A549 (cell line): ENCODE measurements at regions of chr17 and their contacts with region 1.

Region 1: DNA sequence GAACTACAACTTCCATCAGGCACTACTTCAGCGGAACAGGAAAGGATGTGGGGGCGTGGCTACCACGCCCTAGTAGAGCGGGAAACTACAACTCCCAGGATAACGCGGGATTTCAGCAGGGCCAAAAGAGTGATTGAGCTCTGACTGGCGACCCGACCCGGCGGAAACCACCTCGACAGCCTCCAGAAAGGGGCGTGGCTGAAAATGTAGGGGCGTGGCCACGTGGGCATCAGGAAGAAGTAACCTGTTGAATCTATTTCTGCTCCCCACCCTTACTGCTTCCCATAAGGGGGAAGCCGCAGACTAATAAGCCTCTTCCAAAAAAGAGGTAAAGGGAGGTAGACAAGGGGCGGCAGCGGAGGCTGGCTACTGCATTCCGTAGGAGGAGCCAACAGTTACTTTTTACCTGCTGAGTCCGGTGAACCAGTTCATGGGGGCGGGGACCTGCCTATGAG is at the start of gene TMEM102:
- DNase-seq: peak; percentile 99
- ATAC-seq: peak; percentile 75 to 87
- H3K4me3 ChIP-seq: peak within 1 kb of the TSS; percentile 55
- H3K27ac ChIP-seq: peak within 1 kb of the TSS; percentile 62 to 85
- H3K4me1 ChIP-seq: peaks cover 23% of the 10 kb centered on the region
- CTCF ChIP-seq: no peak
- EP300 ChIP-seq: no peak
- POLR2A ChIP-seq: peak; percentile 16
- RAD21 ChIP-seq: no peak
- polyA plus RNA-seq, gene TMEM102: 4.4 and 4.9 TPM in 2 replicates

Region 2: GRCh38 chr17:7314719-7315569 is 120.3 kb before region 1 on chr17 and contains the start of gene GPS2:
- CTCF ChIA-PET with region 1: no interaction called
- POLR2A ChIA-PET with region 1: no interaction called
- DNase-seq: peak; percentile 93 to 95
- ATAC-seq: peak; percentile 77 to 82
- H3K4me3 ChIP-seq: peak within 1 kb of the TSS; percentile 75
- H3K27ac ChIP-seq: peak within 1 kb of the TSS; percentile 88 to 95
- H3K4me1 ChIP-seq: peaks cover 47% of the 10 kb centered on the region
- CTCF ChIP-seq: no peak
- EP300 ChIP-seq: peak in 1 of 2 experiments; percentile 6; a peak in 1 of 5 replicates
- POLR2A ChIP-seq: peak; percentile 82
- RAD21 ChIP-seq: no peak; a peak in 2 of 5 replicates
- polyA plus RNA-seq, gene GPS2: 48.5 and 61.7 TPM in 2 replicates

Region 3: DNA sequence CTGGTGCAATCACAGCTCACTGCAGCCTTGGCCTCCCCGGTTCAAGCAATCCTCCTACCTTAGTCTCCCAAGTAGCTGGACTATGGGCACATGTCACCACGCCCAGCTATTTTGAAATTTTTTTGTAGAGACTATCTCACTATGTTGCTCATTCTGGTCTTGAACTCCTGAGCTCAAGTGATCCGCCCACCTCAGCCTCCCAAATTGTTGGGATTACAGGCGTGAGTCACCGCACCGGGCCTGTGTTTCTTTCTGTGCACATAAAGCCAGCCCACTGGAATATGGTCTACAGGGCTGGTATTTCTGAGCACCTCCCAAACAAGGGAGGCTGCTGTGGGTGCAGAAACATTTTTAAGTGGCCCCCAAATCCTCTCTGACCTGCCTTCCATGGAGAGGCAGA is 71.9 kb before region 1 on chr17:
- CTCF ChIA-PET with region 1: interaction called, 232 read pairs
- POLR2A ChIA-PET with region 1: no interaction called
- DNase-seq: peak in 1 of 2 experiments; percentile 52
- ATAC-seq: peak; percentile 45 to 69; a peak in 4 of 6 replicates
- H3K4me3 ChIP-seq: no peak overlapping the region
- H3K27ac ChIP-seq: no peak overlapping the region
- H3K4me1 ChIP-seq: peaks cover 7% of the 10 kb centered on the region; the same call in 2 of the 3 replicates
- CTCF ChIP-seq: no peak
- EP300 ChIP-seq: no peak
- POLR2A ChIP-seq: no peak
- RAD21 ChIP-seq: no peak

Region 4: GRCh38 chr17:7394452-7395191 is 40.6 kb before region 1 on chr17 and contains the start of gene PLSCR3:
- CTCF ChIA-PET with region 1: interaction called, 33 read pairs
- POLR2A ChIA-PET with region 1: interaction called, 5 read pairs
- DNase-seq: peak; percentile 83 to 91
- ATAC-seq: peak; percentile 90 to 91
- H3K4me3 ChIP-seq: peak within 1 kb of the TSS; percentile 71
- H3K27ac ChIP-seq: peak within 1 kb of the TSS; percentile 83 to 92
- H3K4me1 ChIP-seq: peaks cover 10% of the 10 kb centered on the region; the same call in 1 of the 3 replicates
- CTCF ChIP-seq: peak; percentile 28
- EP300 ChIP-seq: no peak
- POLR2A ChIP-seq: peak; percentile 93
- RAD21 ChIP-seq: no peak; a peak in 1 of 5 replicates
- polyA plus RNA-seq, gene PLSCR3: 11.0 and 13.7 TPM in 2 replicates

Region 5: DNA sequence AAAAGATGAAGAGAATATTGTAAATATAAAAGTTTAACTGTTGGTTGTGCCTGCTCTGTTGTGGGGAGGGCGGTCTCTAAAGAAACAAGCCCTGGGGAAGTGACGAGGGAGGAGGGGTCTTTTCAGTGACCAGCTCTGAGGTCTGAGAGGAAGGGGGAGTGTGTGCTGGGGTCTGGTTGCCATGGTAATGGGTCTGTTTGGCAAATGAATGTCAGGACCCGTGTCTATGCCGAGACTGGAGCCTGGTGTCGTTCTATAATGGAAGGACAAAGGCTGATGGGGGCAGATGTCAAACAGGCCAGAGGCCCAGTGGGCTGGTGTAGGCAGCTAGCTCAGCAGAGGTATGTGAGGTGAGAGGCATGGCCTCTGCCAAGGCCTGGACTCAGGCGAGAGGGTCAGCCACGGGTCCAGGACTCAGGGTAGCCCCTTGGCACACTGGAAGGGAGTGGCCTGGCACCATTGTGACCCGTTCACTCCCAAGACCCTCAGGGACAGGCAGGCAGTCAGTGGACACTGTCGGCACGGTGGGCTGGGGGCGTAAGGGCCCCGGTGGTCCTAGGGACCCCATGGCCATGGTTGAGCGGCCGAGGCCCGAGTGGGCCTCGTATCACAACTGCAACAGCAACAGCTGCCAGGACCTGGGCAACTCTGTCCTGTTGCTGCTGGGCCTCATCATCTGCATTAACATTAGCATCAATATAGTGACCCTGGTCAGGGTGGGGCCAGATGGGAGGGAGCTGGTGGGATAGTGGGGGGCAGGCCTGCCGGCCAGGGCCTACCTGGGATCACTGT is 15.2 kb before region 1 on chr17 and contains the start of gene SPEM1:
- CTCF ChIA-PET with region 1: interaction called, 50 read pairs
- POLR2A ChIA-PET with region 1: interaction called, 9 read pairs
- DNase-seq: no peak
- ATAC-seq: 0 out of 6 replicates have a peak, but pooled peaks of 1 of the 2 experiments have one; percentile 9
- H3K4me3 ChIP-seq: no peak within 1 kb of the TSS
- H3K27ac ChIP-seq: no peak within 1 kb of the TSS
- H3K4me1 ChIP-seq: no peaks in the 10 kb centered on the region
- CTCF ChIP-seq: no peak
- EP300 ChIP-seq: no peak
- POLR2A ChIP-seq: no peak
- RAD21 ChIP-seq: no peak
- polyA plus RNA-seq, gene SPEM1: not detected in 2 replicates

Region 6: GRCh38 chr17:7484067-7484918 is 49.0 kb after region 1 on chr17 and contains the start of gene POLR2A:
- CTCF ChIA-PET with region 1: interaction called, 49 read pairs
- POLR2A ChIA-PET with region 1: interaction called, 31 read pairs
- DNase-seq: peak; percentile 99
- ATAC-seq: peak; percentile 67 to 82
- H3K4me3 ChIP-seq: peak within 1 kb of the TSS; percentile 70
- H3K27ac ChIP-seq: peak within 1 kb of the TSS; percentile 91 to 97
- H3K4me1 ChIP-seq: peaks cover 48% of the 10 kb centered on the region
- CTCF ChIP-seq: no peak
- EP300 ChIP-seq: peak in 1 of 2 experiments; percentile 27; a peak in 1 of 5 replicates
- POLR2A ChIP-seq: peak; percentile 99
- RAD21 ChIP-seq: no peak
- polyA plus RNA-seq, gene POLR2A: 22.8 and 57.1 TPM in 2 replicates

Region 7: DNA sequence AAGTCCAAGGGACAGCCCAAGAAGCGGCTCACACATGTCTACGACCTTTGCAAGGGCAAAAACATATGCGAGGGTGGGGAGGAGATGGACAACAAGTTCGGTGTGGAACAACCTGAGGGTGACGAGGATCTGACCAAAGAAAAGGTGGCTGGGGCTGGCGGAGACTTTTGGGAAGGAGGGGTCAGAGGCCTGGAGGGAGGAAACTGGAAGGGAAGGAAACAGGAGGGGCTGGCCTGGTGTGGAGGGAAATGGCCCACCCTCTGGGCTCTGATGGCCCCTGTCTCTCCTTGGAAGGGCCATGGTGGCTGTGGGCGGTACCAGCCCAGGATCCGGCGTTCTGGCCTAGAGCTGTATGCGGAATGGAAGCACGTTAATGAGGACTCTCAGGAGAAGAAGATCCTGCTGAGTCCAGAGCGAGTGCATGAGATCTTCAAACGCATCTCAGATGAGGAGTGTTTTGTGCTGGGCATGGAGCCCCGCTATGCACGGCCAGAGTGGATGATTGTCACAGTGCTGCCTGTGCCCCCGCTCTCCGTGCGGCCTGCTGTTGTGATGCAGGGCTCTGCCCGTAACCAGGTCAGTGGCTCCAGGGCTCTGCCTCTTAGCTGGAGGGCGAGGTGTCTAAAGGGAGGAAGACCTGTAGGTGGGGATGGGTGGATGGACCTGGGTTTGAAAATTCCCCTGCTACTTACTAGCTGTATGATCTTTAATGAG is 61.4 kb after region 1 on chr17:
- CTCF ChIA-PET with region 1: interaction called, 14 read pairs
- POLR2A ChIA-PET with region 1: no interaction called
- DNase-seq: no peak
- ATAC-seq: peak in 1 of 2 experiments; percentile 14; a peak in 2 of 6 replicates
- H3K4me3 ChIP-seq: no peak overlapping the region
- H3K27ac ChIP-seq: no peak overlapping the region
- H3K4me1 ChIP-seq: peaks cover 1% of the 10 kb centered on the region; the same call in 1 of the 3 replicates
- CTCF ChIP-seq: no peak
- EP300 ChIP-seq: no peak
- POLR2A ChIP-seq: no peak
- RAD21 ChIP-seq: no peak

Region 8: GRCh38 chr17:7627250-7628121 is 192.2 kb after region 1 on chr17 and contains the start of gene SAT2:
- CTCF ChIA-PET with region 1: no interaction called
- POLR2A ChIA-PET with region 1: no interaction called
- DNase-seq: peak; percentile 94 to 99
- ATAC-seq: peak; percentile 91 to 94
- H3K4me3 ChIP-seq: peak within 1 kb of the TSS; percentile 85
- H3K27ac ChIP-seq: peak within 1 kb of the TSS; percentile 93 to 94
- H3K4me1 ChIP-seq: peaks cover 10% of the 10 kb centered on the region; the same call in 2 of the 3 replicates
- CTCF ChIP-seq: no peak
- EP300 ChIP-seq: no peak
- POLR2A ChIP-seq: peak; percentile 77
- RAD21 ChIP-seq: 0 out of 5 replicates have a peak, but pooled peaks of 1 of the 2 experiments have one; percentile 17
- polyA plus RNA-seq, gene SAT2: 38.1 and 44.4 TPM in 2 replicates

Region 9: GRCh38 chr17:8029135-8029534 is 593.9 kb after region 1 on chr17:
- CTCF ChIA-PET with region 1: no interaction called
- POLR2A ChIA-PET with region 1: no interaction called
- DNase-seq: no peak
- ATAC-seq: peak in 1 of 2 experiments; percentile 32; a peak in 2 of 6 replicates
- H3K4me3 ChIP-seq: no peak overlapping the region
- H3K27ac ChIP-seq: no peak overlapping the region
- H3K4me1 ChIP-seq: peaks cover 7% of the 10 kb centered on the region; the same call in 2 of the 3 replicates
- CTCF ChIP-seq: no peak
- EP300 ChIP-seq: no peak
- POLR2A ChIP-seq: no peak
- RAD21 ChIP-seq: no peak